Aorta (tissue), 5 donors: ENCODE measurements at regions of chr3 and their contacts with region 1.

Region 1: DNA sequence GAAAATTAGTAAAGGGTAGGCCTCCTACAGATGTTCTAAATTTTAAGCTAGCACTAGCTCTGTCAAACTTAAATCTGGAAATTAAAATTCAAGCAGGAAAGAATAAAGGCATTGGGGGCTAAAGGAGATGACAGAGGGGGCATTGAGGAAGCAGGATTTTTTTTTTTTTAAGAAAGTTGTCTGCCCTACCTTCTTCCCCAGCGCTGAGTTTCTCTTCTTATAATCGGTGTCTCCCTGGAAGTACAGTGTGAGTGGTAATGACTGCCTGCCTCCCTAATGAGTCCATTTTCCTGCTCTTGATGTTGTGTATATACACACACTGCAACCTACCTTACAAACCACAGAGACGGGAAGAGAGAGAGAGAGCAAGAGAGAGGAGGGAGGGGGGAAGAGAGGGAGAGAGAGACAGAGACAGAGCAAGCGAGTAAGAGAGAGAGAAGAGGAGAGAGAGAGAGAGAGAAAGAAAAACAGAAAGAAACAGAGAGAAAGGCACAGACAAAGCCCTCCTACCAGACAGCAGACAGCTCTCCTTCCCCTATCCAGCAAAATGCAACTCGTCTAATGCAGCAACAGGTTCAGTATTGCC is 47.0 kb downstream of the ZBTB20 start:
- DNase-seq: no peak
- ATAC-seq: peak; percentile 78
- H3K4me3 ChIP-seq: peak overlapping the region; percentile 54 to 64
- H3K27ac ChIP-seq: peak overlapping the region in 1 of 2 donors; percentile 48
- H3K4me1 ChIP-seq: peaks cover 0 to 6% of the 10 kb centered on the region in 2 donors
- H3K27me3 ChIP-seq: no peaks in the 10 kb centered on the region

Region 2: GRCh38 chr3:114823061-114823460 is 277.0 kb before region 1 on chr3:
- intact Hi-C with region 1: loop called in 1 of 2 experiments (anchors 5 kb)
- DNase-seq: no peak
- ATAC-seq: no peak
- H3K4me3 ChIP-seq: no peak overlapping the region
- H3K27ac ChIP-seq: no peak overlapping the region
- H3K4me1 ChIP-seq: peaks cover 0 to 2% of the 10 kb centered on the region in 2 donors
- H3K27me3 ChIP-seq: no peaks in the 10 kb centered on the region